GM13977 (cell line): ENCODE measurements at regions of chr5 and their contacts with region 1.

Region 1: GRCh38 chr5:151825445-151825844 is 53.7 kb downstream of the G3BP1 start:
- DNase-seq: peak; percentile 36
- CTCF ChIP-seq: peak; percentile 85

Region 2: GRCh38 chr5:151233616-151234085 is 591.8 kb before region 1 on chr5:
- in situ Hi-C with region 1: no loop called
- DNase-seq: peak; percentile 64
- CTCF ChIP-seq: no peak

Region 3: GRCh38 chr5:152136918-152137462 is 311.5 kb after region 1 on chr5:
- in situ Hi-C with region 1: loop called (anchors 10 kb)
- DNase-seq: no peak
- CTCF ChIP-seq: no peak

Region 4: GRCh38 chr5:152505442-152506042 is 680.1 kb after region 1 on chr5:
- in situ Hi-C with region 1: loop called (anchors 25 kb)
- DNase-seq: peak; percentile 30
- CTCF ChIP-seq: peak; percentile 70